Calu3 (cell line): ENCODE measurements at regions of chr12 and their contacts with region 1.

Region 1: DNA sequence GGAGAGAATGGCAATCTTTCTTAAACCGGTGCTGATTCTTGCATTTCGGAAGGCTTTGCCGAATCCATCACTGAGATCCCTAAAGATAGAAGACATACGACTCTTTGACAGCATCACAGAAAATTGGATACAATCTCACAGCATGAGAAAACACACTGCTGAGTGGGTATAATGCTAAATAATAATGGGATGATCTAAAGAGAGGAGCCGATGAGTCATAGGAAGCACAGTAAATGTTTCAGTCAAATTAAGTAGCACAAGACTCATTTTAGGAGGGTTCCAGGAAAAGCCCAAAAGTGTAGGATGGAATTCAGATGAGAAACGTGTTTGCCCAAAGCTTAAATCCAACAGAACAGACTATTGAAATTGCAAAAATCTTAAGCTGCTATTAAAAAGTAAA is 81.7 kb downstream of the CPNE8 start:
- DNase-seq: no peak
- H3K4me3 Mint-ChIP-seq: no peak overlapping the region
- H3K27ac Mint-ChIP-seq: no peak overlapping the region
- H3K4me1 Mint-ChIP-seq: no peaks in the 10 kb centered on the region
- H3K27me3 Mint-ChIP-seq: no peaks in the 10 kb centered on the region
- CTCF ChIP-seq: no peak

Region 2: DNA sequence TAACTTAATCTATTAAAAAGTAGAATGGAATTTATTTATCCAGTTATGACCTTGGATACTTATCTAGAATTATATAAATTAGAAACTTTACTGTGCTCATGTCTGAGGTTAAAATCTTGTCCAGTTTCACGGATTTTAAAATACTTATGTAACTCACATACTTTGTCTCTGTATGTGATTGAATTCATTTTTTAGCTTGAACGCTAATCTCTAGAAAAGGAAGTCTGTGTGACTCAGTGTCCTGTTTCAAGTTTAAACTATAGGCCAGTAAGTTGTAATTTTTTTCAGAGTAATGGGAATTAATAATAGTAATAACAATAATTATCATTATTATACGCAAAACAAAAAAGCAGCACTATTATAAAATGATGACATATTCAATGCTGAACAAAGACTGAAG is 86.9 kb before region 1 on chr12:
- CTCF ChIA-PET with region 1: no interaction called
- intact Hi-C with region 1: loop called (anchors 10 kb)
- DNase-seq: no peak
- H3K4me3 Mint-ChIP-seq: no peak overlapping the region
- H3K27ac Mint-ChIP-seq: no peak overlapping the region
- H3K4me1 Mint-ChIP-seq: no peaks in the 10 kb centered on the region
- H3K27me3 Mint-ChIP-seq: no peaks in the 10 kb centered on the region
- CTCF ChIP-seq: no peak